Right lobe of liver (tissue), 6 donors: ENCODE measurements at regions of chr1 and their contacts with region 1.

Region 1: DNA sequence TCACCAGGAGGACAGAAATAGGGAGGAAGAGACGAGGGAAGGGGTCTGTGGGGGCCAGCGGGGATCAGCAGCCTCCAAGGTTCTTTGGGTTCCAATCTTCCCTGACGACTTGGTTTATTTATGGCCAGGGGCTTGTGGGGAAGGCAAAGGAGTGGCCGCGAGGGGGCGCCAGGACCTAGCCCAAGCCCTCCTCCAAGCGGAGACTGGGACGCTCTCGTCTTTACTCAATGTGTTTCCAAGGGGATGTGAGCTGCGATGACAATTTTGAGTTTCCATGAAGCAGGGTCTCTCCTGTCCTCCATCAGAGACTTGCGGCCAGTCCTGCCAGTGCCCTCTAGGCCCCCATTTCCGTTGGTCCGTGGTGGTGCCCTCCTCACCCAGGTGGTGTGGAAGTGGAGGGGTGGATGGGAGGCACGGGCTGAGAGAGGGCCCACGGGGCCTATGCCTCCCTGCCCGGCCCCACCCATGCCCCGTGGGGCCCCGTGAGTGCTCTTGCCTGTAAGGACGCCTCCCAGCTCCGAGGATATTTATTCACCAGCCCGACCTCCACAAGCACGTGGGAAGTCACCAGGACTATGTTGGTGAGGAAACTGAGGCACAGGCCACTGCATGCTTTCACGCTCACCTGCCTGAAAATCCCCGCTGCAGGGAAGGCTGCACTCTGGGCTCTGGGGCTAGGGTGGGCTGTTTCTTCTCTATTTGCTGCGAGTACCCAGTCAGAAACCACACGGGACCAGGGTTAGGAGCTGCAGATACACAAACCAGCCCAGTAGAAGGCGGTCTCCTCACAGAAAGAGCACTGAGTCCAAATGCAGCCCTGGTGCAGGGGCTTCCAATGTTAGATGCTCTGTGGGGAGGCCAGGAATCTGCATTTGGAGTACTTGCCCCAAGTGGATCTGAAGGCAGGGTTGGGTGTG is 26.5 kb downstream of the DMRTB1 start:
- DNase-seq: peak; percentile 71 to 75 (median 72)
- ATAC-seq: peak; percentile 79 to 93 (median 84)
- H3K4me3 ChIP-seq: no peak overlapping the region
- H3K27ac ChIP-seq: no peak overlapping the region
- H3K4me1 ChIP-seq: no peaks in the 10 kb centered on the region
- H3K27me3 ChIP-seq: no peaks in the 10 kb centered on the region
- CTCF ChIP-seq: peak; percentile 58 to 88 (median 80)
- POLR2A ChIP-seq: no peak

Region 2: GRCh38 chr1:53754484-53755312 is 269.0 kb after region 1 on chr1:
- intact Hi-C with region 1: loop called (anchors 5 to 10 kb)
- DNase-seq: peak in 1 of 3 donors; percentile 56
- ATAC-seq: peak; percentile 76 to 91 (median 82)
- H3K4me3 ChIP-seq: no peak overlapping the region
- H3K27ac ChIP-seq: no peak overlapping the region
- H3K4me1 ChIP-seq: no peaks in the 10 kb centered on the region
- H3K27me3 ChIP-seq: no peaks in the 10 kb centered on the region
- CTCF ChIP-seq: peak; percentile 59 to 78 (median 70)
- POLR2A ChIP-seq: no peak